ENCODE measurements at regions of chr16 and their contacts with region 1.

Region 1: GRCh38 chr16:88662843-88663606 is at the start of gene MVD:
- DNase-seq: peak; percentile 96
- H3K4me3 Mint-ChIP-seq: peak within 1 kb of the TSS; percentile 88
- H3K27ac Mint-ChIP-seq: peak within 1 kb of the TSS; percentile 84
- H3K4me1 Mint-ChIP-seq: peaks cover 20% of the 10 kb centered on the region
- H3K27me3 Mint-ChIP-seq: no peaks in the 10 kb centered on the region
- total RNA-seq, gene MVD: 88.8 and 90.0 TPM in 2 replicates

Region 2: DNA sequence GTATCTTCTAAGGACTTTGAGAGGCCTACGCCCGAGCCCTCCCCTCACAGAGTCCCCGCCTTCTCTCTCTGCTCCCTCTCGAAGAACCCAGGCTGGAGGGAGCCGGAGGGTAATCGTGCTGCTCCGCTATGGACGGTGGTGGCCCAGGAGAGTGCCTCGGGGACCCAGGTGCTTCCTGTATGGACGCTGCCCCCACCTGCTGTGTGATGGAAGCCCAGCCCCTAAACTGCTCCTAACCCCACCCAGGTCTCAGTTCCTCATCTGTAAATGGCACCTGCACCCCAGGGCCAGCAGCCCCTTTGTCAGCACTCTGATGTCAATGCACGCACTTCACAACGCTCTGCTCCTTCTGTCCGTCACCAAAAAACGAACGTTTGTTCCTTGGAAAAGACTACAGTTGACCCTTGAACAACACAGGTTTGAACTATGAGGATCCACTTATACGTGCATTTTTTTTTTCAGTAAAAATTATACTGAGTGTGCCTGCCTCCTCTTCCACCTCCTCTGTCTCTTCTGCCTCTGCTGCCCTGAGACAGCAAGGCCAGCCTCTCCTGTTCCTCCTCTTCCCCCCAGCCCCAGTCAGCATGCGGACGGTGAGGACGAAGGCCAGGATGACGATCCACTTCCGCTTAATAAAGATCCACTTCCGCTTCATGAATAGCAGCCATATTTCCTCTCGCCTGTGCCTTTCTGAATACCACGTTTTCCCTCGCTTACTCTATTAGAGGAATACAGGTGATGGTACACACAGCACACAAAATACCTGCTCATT is 593.4 kb before region 1 on chr16:
- intact Hi-C with region 1: no loop called
- DNase-seq: no peak
- H3K4me3 Mint-ChIP-seq: no peak overlapping the region
- H3K27ac Mint-ChIP-seq: peak overlapping the region; percentile 59
- H3K4me1 Mint-ChIP-seq: no peaks in the 10 kb centered on the region
- H3K27me3 Mint-ChIP-seq: no peaks in the 10 kb centered on the region

Region 3: GRCh38 chr16:88569985-88570690 is 92.9 kb before region 1 on chr16 and contains the start of gene ZC3H18:
- intact Hi-C with region 1: loop called (anchors 1 kb)
- DNase-seq: peak; percentile 96
- H3K4me3 Mint-ChIP-seq: peak within 1 kb of the TSS; percentile 92
- H3K27ac Mint-ChIP-seq: peak within 1 kb of the TSS; percentile 86
- H3K4me1 Mint-ChIP-seq: peaks cover 40% of the 10 kb centered on the region
- H3K27me3 Mint-ChIP-seq: no peaks in the 10 kb centered on the region
- total RNA-seq, gene ZC3H18: 115 and 116 TPM in 2 replicates

Region 4: GRCh38 chr16:88628512-88628974 is 34.5 kb before region 1 on chr16:
- intact Hi-C with region 1: no loop called
- DNase-seq: no peak
- H3K4me3 Mint-ChIP-seq: no peak overlapping the region
- H3K27ac Mint-ChIP-seq: no peak overlapping the region
- H3K4me1 Mint-ChIP-seq: no peaks in the 10 kb centered on the region
- H3K27me3 Mint-ChIP-seq: no peaks in the 10 kb centered on the region

Region 5: GRCh38 chr16:88650749-88651275 is 12.2 kb before region 1 on chr16 and contains the start of gene CYBA:
- intact Hi-C with region 1: loop called (anchors 1 kb)
- DNase-seq: peak; percentile 88
- H3K4me3 Mint-ChIP-seq: peak within 1 kb of the TSS; percentile 88
- H3K27ac Mint-ChIP-seq: peak within 1 kb of the TSS; percentile 96
- H3K4me1 Mint-ChIP-seq: peaks cover 13% of the 10 kb centered on the region
- H3K27me3 Mint-ChIP-seq: no peaks in the 10 kb centered on the region
- total RNA-seq, gene CYBA: 218 and 219 TPM in 2 replicates

Region 6: DNA sequence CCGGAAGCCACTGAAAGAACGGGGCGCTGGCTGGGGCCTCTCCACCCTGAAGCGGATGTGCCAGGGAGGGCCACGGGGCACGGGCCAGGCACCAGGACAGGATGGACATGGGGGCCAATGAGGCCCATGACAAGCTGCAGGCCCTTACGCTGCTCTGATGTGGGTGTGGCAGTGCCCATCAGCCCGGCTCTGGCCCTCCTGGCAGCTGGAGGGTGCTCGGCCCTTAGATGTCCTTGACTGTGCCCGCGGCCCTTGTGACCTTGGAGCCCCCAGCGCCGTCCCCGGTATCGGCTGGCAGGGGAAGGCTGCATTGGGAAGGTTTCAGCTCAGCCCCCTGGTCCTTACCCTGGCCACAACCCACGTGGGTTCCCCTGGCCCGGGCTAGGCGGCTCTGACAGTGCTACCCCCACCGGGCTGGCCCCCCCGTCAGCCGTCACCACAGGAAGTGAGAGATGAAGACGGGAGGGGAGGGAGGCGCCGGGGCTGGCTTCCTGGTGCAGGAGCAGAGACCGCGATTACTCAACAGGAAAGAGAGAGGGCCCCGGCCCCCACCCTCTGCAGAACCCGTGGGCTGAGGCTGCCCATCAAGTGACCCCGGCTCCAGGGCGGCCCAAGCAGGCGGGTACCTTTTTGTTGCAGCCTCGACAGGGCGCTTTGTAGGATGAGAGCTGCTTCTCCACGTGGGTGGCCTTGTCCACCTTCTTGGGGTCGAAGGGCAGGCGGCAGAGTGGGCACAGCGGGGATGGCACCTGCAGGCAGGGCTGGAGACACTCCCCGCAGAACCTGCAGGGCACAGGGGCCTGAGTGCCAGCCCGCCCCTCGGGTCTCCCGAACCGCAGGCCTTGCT is 37.8 kb after region 1 on chr16:
- intact Hi-C with region 1: loop called (anchors 1 kb)
- DNase-seq: peak; percentile 92
- H3K4me3 Mint-ChIP-seq: peak overlapping the region; percentile 89
- H3K27ac Mint-ChIP-seq: peak overlapping the region; percentile 94
- H3K4me1 Mint-ChIP-seq: peaks cover 57% of the 10 kb centered on the region
- H3K27me3 Mint-ChIP-seq: no peaks in the 10 kb centered on the region

Measured in activated T-helper 1 cell treated with anti-CD3 and anti-CD28 coated beads, Interleukin-12 subunit alpha, Interleukin-12 subunit beta, Interleukin-2, Interleukin-4 antibody, amounts not matched to agents 30 ng/mL and 10 ng/mL and 1 ng/mL, durations not matched to agents 14 hours and 24 hours and 36 hours (primary cell).